Activated T-helper 1 cell treated with anti-CD3 and anti-CD28 coated beads, Interleukin-12 subunit alpha, Interleukin-12 subunit beta, Interleukin-2, Interleukin-4 antibody, amounts not matched to agents 30 ng/mL and 10 ng/mL and 1 ng/mL, durations not matched to agents 14 hours and 24 hours and 36 hours (primary cell): ENCODE measurements at regions of chr3 and their contacts with region 1.

Region 1: DNA sequence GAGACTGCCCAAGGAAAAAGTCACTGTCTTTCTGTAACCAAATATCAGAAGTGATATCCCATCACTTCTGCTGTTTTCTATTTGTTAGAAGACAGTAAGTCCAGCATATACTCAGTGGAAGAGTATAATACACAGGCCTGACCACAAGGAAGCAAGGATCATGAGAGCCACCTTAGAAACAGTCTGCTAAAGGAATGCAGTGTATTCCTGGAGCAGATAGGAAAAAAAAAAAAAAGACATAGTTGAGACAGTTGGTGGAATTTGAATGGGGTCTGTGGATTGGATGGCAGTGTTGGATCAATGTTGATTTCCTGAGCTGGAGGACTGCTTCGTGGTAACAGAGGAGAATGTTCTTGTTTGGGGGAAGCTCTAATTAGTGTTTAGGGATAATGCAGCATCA is 26.5 kb upstream of the FBXL2 start:
- DNase-seq: no peak
- H3K4me3 Mint-ChIP-seq: no peak overlapping the region
- H3K27ac Mint-ChIP-seq: no peak overlapping the region
- H3K4me1 Mint-ChIP-seq: no peaks in the 10 kb centered on the region
- H3K27me3 Mint-ChIP-seq: peaks cover 7% of the 10 kb centered on the region

Region 2: GRCh38 chr3:33131331-33132018 is 119.2 kb before region 1 on chr3:
- intact Hi-C with region 1: loop called (anchors 2 kb)
- DNase-seq: peak; percentile 18
- H3K4me3 Mint-ChIP-seq: no peak overlapping the region
- H3K27ac Mint-ChIP-seq: no peak overlapping the region
- H3K4me1 Mint-ChIP-seq: peaks cover 7% of the 10 kb centered on the region
- H3K27me3 Mint-ChIP-seq: no peaks in the 10 kb centered on the region